Naive thymus-derived CD8-positive, alpha-beta T cell (primary cell): ENCODE measurements at regions of chr12 and their contacts with region 1.

Region 1: DNA sequence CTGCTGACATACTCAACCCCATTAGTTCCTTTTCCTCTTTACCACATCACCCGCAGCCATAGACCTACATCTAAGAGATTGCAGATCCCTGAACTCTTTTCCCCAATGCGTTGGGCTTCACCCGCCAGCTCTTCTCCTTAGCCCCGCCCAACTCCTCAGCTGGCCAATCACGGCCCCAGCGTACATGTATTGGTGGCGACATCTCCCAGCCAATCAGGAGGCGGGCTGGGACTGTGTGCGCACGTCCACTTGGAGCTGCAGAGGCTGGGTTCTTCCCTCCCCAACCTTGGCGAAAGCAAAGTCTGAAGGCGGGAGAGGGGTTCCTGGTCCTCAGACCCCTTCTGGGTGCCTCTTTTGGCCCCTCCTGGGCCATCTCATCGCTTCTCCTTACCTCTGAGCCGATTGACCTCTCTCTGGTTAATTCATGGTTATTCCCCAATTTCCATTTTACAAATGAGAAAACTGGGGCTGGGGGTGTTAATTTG is 11.0 kb downstream of the PDE1B start:
- DNase-seq: peak; percentile 75 to 92 (median 86)
- ATAC-seq: peak; percentile 100
- H3K4me3 Mint-ChIP-seq: peak overlapping the region; percentile 84 to 96 (median 91)
- H3K27ac Mint-ChIP-seq: peak overlapping the region; percentile 78 to 97 (median 92)
- H3K4me1 Mint-ChIP-seq: peaks cover 13 to 28% (median 25%) of the 10 kb centered on the region in 4 donors
- H3K27me3 Mint-ChIP-seq: peaks cover 0 to 2% (median 0%) of the 10 kb centered on the region in 5 donors

Region 2: GRCh38 chr12:54549774-54550451 is 10.5 kb before region 1 on chr12:
- POLR2A ChIA-PET with region 1: interaction called, 40 read pairs
- DNase-seq: peak in 5 of 10 donors; percentile 11 to 31 (median 19)
- ATAC-seq: peak; percentile 63 to 68
- H3K4me3 Mint-ChIP-seq: peak overlapping the region; percentile 78 to 93 (median 88)
- H3K27ac Mint-ChIP-seq: peak overlapping the region in 5 of 10 donors; percentile 32 to 80 (median 76)
- H3K4me1 Mint-ChIP-seq: peaks cover 21 to 32% (median 25%) of the 10 kb centered on the region in 4 donors
- H3K27me3 Mint-ChIP-seq: peaks cover 2 to 23% (median 4%) of the 10 kb centered on the region in 5 donors

Region 3: GRCh38 chr12:54579258-54579657 is 18.8 kb after region 1 on chr12:
- POLR2A ChIA-PET with region 1: no interaction called
- DNase-seq: peak in 1 of 10 donors; percentile 9
- ATAC-seq: peak in 1 of 2 donors; percentile 17
- H3K4me3 Mint-ChIP-seq: no peak overlapping the region
- H3K27ac Mint-ChIP-seq: peak overlapping the region in 1 of 10 donors; percentile 9
- H3K4me1 Mint-ChIP-seq: peaks cover 3 to 8% (median 6%) of the 10 kb centered on the region in 4 donors
- H3K27me3 Mint-ChIP-seq: peaks cover 0 to 14% (median 3%) of the 10 kb centered on the region in 5 donors

Region 4: GRCh38 chr12:54680374-54680773 is 120.0 kb after region 1 on chr12:
- POLR2A ChIA-PET with region 1: no interaction called
- DNase-seq: peak in 1 of 10 donors; percentile 25
- ATAC-seq: no peak
- H3K4me3 Mint-ChIP-seq: no peak overlapping the region
- H3K27ac Mint-ChIP-seq: no peak overlapping the region
- H3K4me1 Mint-ChIP-seq: peaks cover 0 to 5% (median 3%) of the 10 kb centered on the region in 4 donors
- H3K27me3 Mint-ChIP-seq: peaks cover 40 to 84% (median 65%) of the 10 kb centered on the region in 5 donors